ENCODE measurements at regions of chr11 and their contacts with region 1.

Region 1: DNA sequence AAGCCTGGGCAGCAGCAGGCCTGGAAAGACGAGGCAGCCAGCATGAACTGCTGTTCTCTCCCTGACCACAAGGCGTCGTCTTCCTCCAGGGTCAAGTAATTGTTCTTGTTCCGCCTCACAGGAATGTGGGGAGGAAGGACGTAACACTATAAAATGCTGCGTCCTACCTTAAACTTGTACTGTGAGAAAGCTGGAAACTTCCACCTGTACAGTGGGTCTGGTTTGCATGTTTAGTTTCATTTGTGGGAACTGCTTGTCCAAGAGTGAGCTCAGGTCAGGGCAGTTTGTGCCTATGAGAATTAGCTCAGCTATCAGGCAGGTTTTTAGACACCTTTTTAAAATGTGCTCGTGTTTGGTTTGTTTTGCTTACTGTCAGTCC is 55.2 kb downstream of the PANX1 start:
- DNase-seq: peak; percentile 63 to 93
- H3K4me3 ChIP-seq: no peak overlapping the region
- H3K27ac ChIP-seq: no peak overlapping the region
- H3K4me1 ChIP-seq: peaks cover 0 to 14% (median 9%) of the 10 kb centered on the region in 4 experiments; a peak in 5 of 7 replicates
- H3K27me3 ChIP-seq: peaks cover 0 to 1% (median 0%) of the 10 kb centered on the region in 4 experiments; a peak in 1 of 7 replicates
- CTCF ChIP-seq: peak; percentile 84 to 98 (median 97)
- EP300 ChIP-seq: no peak
- POLR2A ChIP-seq: no peak; a peak in 2 of 3 replicates
- RAD21 ChIP-seq: peak; percentile 87

Region 2: DNA sequence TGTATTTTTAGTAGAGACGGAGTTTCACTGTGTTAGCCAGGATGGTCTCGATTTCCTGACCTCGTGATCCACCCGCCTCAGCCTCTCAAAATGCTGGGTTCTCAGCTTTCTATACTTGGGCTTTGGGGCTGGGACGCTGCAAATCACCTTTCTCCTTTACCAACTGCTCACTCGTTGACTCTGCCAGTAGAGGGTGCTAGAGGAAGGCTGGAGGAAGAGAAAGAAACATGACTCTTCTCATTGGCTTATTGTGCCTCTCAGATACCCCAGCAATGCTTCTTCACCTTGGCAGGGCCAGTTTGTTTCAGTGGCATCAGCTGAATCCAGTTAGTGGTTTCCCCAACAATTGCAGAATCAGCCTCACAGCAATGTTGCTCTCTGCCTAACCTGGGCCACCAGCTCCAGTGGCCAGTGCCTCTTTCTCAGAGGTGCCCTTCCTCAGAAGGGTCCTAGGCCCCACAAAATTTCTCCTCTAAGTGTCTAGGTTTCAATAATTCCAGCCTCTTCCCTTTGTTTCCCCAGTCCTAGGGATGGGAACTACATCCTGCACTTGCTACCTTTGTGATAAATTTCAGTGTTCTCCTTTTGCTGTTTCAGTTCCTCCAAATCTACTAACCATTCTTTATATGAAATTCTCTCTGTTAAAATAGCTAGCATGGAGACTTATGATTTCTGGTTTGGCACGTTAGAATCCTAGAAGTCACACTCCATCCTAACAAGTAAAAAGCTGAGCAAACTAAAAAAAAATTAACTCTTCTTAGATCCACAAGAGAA is 262.0 kb before region 1 on chr11:
- CTCF ChIA-PET with region 1: interaction called, 38 read pairs
- POLR2A ChIA-PET with region 1: no interaction called
- DNase-seq: peak; percentile 43 to 71
- H3K4me3 ChIP-seq: no peak overlapping the region
- H3K27ac ChIP-seq: no peak overlapping the region
- H3K4me1 ChIP-seq: no peaks in the 10 kb centered on the region
- H3K27me3 ChIP-seq: no peaks in the 10 kb centered on the region
- CTCF ChIP-seq: peak; percentile 57 to 92 (median 81)
- EP300 ChIP-seq: no peak
- POLR2A ChIP-seq: no peak
- RAD21 ChIP-seq: peak; percentile 93

Region 3: DNA sequence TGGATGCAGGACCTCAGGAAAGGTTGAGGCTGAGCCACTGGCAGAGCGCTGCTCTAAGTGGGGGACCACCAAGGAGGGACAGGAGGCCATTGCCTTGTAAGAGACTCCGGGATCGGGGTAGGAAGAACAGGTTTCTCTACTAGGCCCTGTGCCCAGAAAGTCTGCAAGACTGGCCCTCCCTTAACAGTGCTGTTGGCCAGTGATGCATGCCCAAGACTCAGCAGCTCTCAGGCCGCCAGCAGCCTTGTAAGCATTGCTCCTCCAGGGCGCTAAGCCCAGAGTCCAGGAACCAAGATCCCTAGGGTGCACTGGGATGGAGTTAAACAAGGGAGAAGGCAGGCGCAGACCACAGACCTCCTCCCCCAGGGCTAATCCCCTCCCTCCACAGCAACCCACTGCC is 94.5 kb before region 1 on chr11:
- CTCF ChIA-PET with region 1: no interaction called
- POLR2A ChIA-PET with region 1: no interaction called
- DNase-seq: no peak
- H3K4me3 ChIP-seq: no peak overlapping the region
- H3K27ac ChIP-seq: no peak overlapping the region
- H3K4me1 ChIP-seq: no peaks in the 10 kb centered on the region
- H3K27me3 ChIP-seq: no peaks in the 10 kb centered on the region
- CTCF ChIP-seq: no peak
- EP300 ChIP-seq: no peak
- POLR2A ChIP-seq: no peak
- RAD21 ChIP-seq: no peak

Region 4: GRCh38 chr11:94100253-94100652 is 83.6 kb before region 1 on chr11:
- CTCF ChIA-PET with region 1: no interaction called
- POLR2A ChIA-PET with region 1: no interaction called
- DNase-seq: no peak
- H3K4me3 ChIP-seq: no peak overlapping the region
- H3K27ac ChIP-seq: no peak overlapping the region
- H3K4me1 ChIP-seq: no peaks in the 10 kb centered on the region; a peak in 1 of 7 replicates
- H3K27me3 ChIP-seq: no peaks in the 10 kb centered on the region
- CTCF ChIP-seq: no peak
- EP300 ChIP-seq: no peak
- POLR2A ChIP-seq: no peak
- RAD21 ChIP-seq: no peak

Region 5: DNA sequence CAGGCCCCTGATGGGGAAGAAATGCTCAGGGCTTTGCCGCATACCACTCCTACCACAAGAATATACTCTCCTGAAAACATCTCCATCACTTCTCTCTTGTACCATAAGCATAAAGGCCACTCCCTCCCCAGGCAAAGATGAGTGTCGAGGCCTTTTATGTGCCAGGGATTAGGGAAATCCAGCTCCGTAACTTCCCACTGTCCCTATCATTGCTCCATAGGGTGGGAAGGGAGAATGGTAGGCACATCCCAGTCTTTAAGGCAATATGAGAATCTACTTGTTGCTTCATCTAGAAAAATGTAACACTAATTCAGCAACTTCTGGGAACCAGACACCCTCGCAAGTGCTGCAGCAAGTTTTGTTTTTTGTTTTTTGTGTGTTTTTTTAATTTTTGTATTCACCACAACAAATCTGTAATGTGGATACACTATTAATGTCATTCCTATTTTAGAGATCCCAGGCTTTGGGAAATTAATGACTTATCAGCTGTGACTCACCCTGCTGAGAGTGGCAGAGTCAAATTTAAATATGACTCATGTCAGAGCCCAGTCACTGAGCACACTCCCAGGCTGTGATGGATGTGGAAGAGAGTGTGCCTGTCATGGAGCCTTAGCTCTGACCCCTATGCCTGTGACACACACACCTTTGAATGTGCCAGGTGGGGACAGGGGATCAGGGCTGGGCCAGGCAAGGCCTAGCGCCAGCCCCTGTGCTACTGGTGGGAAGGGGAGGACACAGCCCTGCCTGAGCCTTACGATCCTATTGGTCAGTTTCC is 31.8 kb before region 1 on chr11:
- CTCF ChIA-PET with region 1: interaction called, 13 read pairs
- POLR2A ChIA-PET with region 1: no interaction called
- DNase-seq: no peak
- H3K4me3 ChIP-seq: no peak overlapping the region
- H3K27ac ChIP-seq: no peak overlapping the region
- H3K4me1 ChIP-seq: peaks cover 10 to 22% (median 16%) of the 10 kb centered on the region in 4 experiments
- H3K27me3 ChIP-seq: no peaks in the 10 kb centered on the region
- CTCF ChIP-seq: no peak
- EP300 ChIP-seq: no peak
- POLR2A ChIP-seq: no peak
- RAD21 ChIP-seq: no peak

Region 6: DNA sequence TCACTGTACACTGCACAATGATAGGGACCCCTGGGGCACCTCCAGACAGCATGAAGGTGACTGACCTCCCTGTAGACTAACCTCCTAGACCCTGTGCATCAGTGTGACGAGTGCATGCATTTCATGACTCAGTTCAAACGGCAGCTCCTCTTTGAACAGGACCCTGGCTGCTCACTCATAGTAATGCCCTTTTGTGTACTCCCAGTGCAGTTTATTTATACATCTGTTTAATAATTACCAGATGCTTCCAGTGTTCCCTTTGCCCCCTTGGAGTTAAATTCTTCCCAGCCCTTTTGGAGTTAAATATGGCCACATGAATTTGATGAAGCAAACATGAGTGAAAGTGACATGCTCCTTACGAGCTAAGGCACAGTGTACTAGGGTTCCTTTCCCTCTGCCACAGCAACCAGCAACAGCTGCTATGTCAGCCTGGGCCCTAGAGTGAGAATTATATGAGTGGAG is 17.2 kb after region 1 on chr11:
- CTCF ChIA-PET with region 1: interaction called, 30 read pairs
- POLR2A ChIA-PET with region 1: interaction called, 3 read pairs
- DNase-seq: no peak
- H3K4me3 ChIP-seq: no peak overlapping the region
- H3K27ac ChIP-seq: no peak overlapping the region
- H3K4me1 ChIP-seq: no peaks in the 10 kb centered on the region
- H3K27me3 ChIP-seq: no peaks in the 10 kb centered on the region
- CTCF ChIP-seq: no peak
- EP300 ChIP-seq: no peak
- POLR2A ChIP-seq: no peak
- RAD21 ChIP-seq: no peak

Region 7: DNA sequence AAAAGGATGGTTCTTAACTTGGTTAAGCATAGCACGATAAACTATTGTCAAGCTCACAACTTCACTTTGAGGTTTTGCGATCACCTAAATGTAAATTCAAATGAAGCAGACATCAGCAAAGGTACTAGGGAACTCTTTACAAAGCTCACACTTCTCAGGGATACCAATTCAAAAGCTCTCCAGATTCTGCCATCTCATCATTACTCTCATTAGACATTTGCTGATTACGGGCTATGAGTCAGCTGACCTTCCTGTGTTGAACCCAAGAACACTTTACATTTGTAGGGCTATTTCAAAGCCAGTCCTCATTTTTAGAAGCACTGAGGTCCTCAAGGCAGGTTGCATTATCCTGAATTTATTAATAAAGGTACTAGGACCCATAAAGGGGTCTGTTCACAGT is 92.1 kb after region 1 on chr11:
- CTCF ChIA-PET with region 1: interaction called, 12 read pairs
- POLR2A ChIA-PET with region 1: no interaction called
- DNase-seq: no peak
- H3K4me3 ChIP-seq: no peak overlapping the region
- H3K27ac ChIP-seq: no peak overlapping the region
- H3K4me1 ChIP-seq: no peaks in the 10 kb centered on the region
- H3K27me3 ChIP-seq: no peaks in the 10 kb centered on the region
- CTCF ChIP-seq: no peak
- EP300 ChIP-seq: no peak
- POLR2A ChIP-seq: no peak
- RAD21 ChIP-seq: no peak

Region 8: DNA sequence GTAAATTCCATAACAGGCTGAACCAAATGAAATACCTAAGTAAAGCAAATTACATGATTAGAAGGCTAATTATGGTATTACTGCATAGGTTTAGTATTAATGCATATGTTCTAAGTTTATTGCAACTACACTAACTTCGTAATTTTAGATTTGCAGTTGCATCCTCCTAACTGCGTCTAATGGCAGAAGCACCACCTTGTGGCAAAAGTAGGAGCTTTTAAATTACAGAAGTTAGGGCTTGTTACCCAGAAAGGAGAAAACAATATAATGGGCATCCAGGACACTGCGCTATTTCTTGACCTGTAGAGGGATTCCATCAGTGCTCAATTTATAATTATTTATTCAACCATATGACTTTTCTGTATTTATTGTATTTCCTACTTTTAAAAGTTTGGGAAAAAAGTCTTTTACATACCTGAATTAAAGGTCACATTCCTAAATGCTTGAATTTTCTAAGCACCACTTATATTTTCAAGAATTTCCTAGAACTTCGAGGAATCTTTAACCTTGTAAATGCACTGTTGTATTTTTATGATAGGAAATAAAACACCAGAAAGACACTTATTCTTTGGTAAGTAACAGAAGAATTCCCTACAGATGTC is 233.6 kb after region 1 on chr11:
- CTCF ChIA-PET with region 1: interaction called, 36 read pairs
- POLR2A ChIA-PET with region 1: interaction called, 3 read pairs
- DNase-seq: no peak
- H3K4me3 ChIP-seq: no peak overlapping the region
- H3K27ac ChIP-seq: no peak overlapping the region
- H3K4me1 ChIP-seq: no peaks in the 10 kb centered on the region
- H3K27me3 ChIP-seq: no peaks in the 10 kb centered on the region
- CTCF ChIP-seq: peak in 2 of 3 experiments; percentile 50 to 57; a peak in 3 of 4 replicates
- EP300 ChIP-seq: no peak
- POLR2A ChIP-seq: no peak
- RAD21 ChIP-seq: peak; percentile 70 to 74

Measured in H1 (cell line).